ENCODE measurements at regions of chr10 and their contacts with region 1.

Region 1: GRCh38 chr10:62244780-62245467 is 23.7 kb downstream of the RTKN2 start:
- DNase-seq: peak; percentile 41
- CTCF ChIP-seq: peak; percentile 63

Region 2: GRCh38 chr10:61896854-61897661 is 347.9 kb before region 1 on chr10:
- in situ Hi-C with region 1: loop called (anchors 10 kb)
- DNase-seq: peak; percentile 83
- CTCF ChIP-seq: peak; percentile 67

Region 3: GRCh38 chr10:62335326-62335725 is 90.4 kb after region 1 on chr10:
- in situ Hi-C with region 1: no loop called
- DNase-seq: no peak
- CTCF ChIP-seq: no peak

Region 4: GRCh38 chr10:62561151-62561550 is 316.2 kb after region 1 on chr10:
- in situ Hi-C with region 1: no loop called
- DNase-seq: no peak
- CTCF ChIP-seq: no peak

Measured in GM13976 (cell line).